ENCODE measurements at regions of chr1 and their contacts with region 1.

Region 1: GRCh38 chr1:39799770-39800470 is 11.3 kb upstream of the BMP8B start:
- DNase-seq: peak; percentile 73
- CTCF ChIP-seq: peak; percentile 86

Region 2: DNA sequence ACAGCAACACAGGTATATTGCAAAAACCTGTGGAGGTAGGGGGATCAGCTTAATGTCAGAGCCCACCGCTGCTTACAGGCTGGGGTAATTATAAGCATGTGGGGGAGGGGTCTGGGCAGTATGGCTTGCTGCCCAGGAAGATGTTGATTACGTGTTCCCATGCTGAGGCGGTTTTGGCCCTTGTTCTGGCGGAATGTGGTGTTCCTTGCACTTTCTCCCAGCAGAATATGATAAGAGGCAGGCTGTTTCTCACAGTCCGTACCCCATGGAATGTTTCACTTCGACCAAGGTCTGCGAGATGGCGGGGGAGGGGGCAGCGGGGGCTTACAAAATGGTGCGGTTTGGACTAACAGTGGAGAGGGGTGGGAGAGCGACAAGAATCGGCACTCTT is 98.9 kb before region 1 on chr1:
- CTCF ChIA-PET with region 1: interaction called, 26 read pairs
- POLR2A ChIA-PET with region 1: no interaction called
- DNase-seq: no peak
- CTCF ChIP-seq: no peak

Region 3: DNA sequence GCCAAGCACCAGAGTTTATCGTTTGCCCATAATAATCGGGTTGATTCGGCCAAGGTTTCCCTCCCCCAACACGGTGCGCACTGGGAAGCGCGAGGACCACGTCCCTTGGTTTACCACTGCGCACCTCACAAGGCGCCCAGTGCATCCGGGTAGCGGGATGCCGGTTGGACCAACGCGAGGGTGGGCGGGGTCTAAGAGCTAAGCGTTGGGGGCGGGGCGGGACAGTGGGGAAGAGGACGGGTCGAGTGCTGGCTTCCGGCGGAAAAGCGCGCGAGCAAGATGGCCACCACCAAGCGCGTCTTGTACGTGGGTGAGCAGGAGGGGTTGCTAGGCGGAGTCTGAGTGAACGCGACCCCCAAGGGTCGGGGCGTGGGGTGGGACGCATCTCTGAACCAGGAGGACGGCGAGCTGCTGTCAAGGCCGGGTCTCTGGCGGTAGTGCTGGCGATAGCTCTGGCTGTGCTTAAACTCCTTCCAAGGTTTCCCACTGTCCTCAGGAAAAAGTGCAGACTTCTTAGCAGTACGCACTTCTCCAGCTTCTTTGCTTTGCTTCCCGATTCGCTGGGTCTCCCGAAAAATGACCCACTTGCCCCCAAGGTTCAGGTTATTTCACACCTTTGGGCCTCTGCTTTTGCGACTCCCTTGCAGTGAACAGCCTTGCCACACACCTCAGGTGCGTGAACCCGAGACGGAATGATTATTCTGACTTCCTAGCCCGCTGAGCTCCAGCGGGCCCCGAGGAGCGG is 61.1 kb before region 1 on chr1 and contains the start of gene PPIE:
- CTCF ChIA-PET with region 1: interaction called, 12 read pairs
- POLR2A ChIA-PET with region 1: no interaction called
- DNase-seq: peak; percentile 95
- CTCF ChIP-seq: no peak

Region 4: GRCh38 chr1:39788758-39789570 is 11.0 kb before region 1 on chr1 and contains the start of gene BMP8B:
- CTCF ChIA-PET with region 1: interaction called, 27 read pairs
- POLR2A ChIA-PET with region 1: no interaction called
- DNase-seq: peak; percentile 84
- CTCF ChIP-seq: peak; percentile 11

Region 5: DNA sequence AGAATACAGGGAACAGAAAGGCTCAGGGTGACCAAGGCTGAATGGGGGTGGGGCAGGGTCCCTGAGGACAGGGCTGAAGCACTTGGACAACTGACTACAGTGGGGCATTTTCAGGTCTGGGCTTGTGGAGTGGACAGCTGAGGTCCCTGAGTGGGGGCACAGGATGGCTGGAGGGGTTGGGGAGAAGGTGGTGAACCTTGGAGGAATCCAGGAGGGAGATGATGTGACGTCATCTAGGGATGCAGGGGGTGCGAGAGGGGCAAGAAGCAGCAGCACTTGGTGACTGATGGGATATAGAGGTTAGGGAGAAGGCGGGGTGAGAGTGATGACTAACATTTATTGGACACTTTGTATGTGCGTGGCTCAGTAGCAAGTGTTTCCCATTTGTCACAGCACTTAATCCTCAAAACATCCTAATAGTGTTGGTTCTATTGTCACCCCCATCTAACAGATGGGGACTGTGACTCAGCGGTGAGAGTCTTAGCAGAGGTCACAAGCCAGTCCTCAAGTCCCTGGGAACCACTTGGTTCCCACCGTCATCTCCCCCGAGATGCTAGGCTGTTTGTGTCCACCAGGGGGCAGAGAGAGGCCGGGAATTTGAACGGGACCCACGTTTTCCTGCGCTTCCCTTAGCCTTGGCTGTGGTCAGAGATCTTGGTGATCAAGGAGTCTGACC is 16.6 kb after region 1 on chr1:
- CTCF ChIA-PET with region 1: interaction called, 52 read pairs
- POLR2A ChIA-PET with region 1: no interaction called
- DNase-seq: peak; percentile 79
- CTCF ChIP-seq: peak; percentile 67

Region 6: GRCh38 chr1:39901698-39902459 is 102.0 kb after region 1 on chr1 and contains the start of gene MYCL:
- CTCF ChIA-PET with region 1: interaction called, 20 read pairs
- POLR2A ChIA-PET with region 1: interaction called, 5 read pairs
- DNase-seq: peak; percentile 87
- CTCF ChIP-seq: peak; percentile 69